ENCODE measurements at regions of chr1 and their contacts with region 1.

Region 1: GRCh38 chr1:27525296-27526272 is 35.6 kb upstream of the WASF2 start:
- DNase-seq: peak; percentile 85
- ATAC-seq: peak; percentile 56
- H3K4me3 Mint-ChIP-seq: peak overlapping the region; percentile 66
- H3K27ac Mint-ChIP-seq: peak overlapping the region; percentile 65
- H3K4me1 Mint-ChIP-seq: peaks cover 67% of the 10 kb centered on the region
- H3K27me3 Mint-ChIP-seq: no peaks in the 10 kb centered on the region

Region 2: GRCh38 chr1:27392096-27392777 is 133.3 kb before region 1 on chr1 and contains the start of gene GPR3:
- CTCF ChIA-PET with region 1: interaction called, 11 read pairs
- POLR2A ChIA-PET with region 1: no interaction called
- DNase-seq: peak; percentile 95
- ATAC-seq: peak; percentile 94
- H3K4me3 Mint-ChIP-seq: peak within 1 kb of the TSS; percentile 74
- H3K27ac Mint-ChIP-seq: peak within 1 kb of the TSS; percentile 82
- H3K4me1 Mint-ChIP-seq: peaks cover 25% of the 10 kb centered on the region
- H3K27me3 Mint-ChIP-seq: peaks cover 12% of the 10 kb centered on the region
- total RNA-seq, gene GPR3: 0.47 to 0.66 TPM

Region 3: GRCh38 chr1:27489910-27490741 is 35.5 kb before region 1 on chr1 and contains the start of gene WASF2:
- CTCF ChIA-PET with region 1: interaction called, 11 read pairs
- POLR2A ChIA-PET with region 1: interaction called, 51 read pairs
- DNase-seq: peak; percentile 98
- ATAC-seq: peak; percentile 94
- H3K4me3 Mint-ChIP-seq: peak within 1 kb of the TSS; percentile 83
- H3K27ac Mint-ChIP-seq: peak within 1 kb of the TSS; percentile 99
- H3K4me1 Mint-ChIP-seq: peaks cover 28% of the 10 kb centered on the region
- H3K27me3 Mint-ChIP-seq: no peaks in the 10 kb centered on the region
- total RNA-seq, gene WASF2: 120 to 127 TPM

Region 4: DNA sequence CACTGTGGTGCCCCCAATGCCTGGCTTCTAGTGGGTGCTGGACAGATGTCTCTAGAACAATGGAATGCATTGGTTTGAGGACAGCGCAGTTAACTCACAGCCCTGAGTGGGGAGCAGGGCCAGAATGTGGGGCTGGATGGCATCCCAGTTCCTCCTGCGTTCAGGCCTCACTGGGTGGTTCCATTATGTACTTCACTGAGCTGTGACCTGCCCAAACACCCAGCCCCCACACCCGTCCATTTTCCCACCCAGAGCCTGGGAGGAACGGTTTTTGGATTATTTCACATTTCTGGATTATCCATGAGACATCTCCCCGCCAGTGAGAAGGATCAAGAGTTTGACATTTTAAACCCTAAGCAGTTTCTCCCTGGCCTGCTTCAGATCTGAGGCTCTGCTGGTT is 19.7 kb after region 1 on chr1:
- CTCF ChIA-PET with region 1: no interaction called
- POLR2A ChIA-PET with region 1: no interaction called
- DNase-seq: no peak
- ATAC-seq: no peak
- H3K4me3 Mint-ChIP-seq: no peak overlapping the region
- H3K27ac Mint-ChIP-seq: no peak overlapping the region
- H3K4me1 Mint-ChIP-seq: peaks cover 20% of the 10 kb centered on the region
- H3K27me3 Mint-ChIP-seq: no peaks in the 10 kb centered on the region

Region 5: GRCh38 chr1:27568300-27569087 is 42.9 kb after region 1 on chr1:
- CTCF ChIA-PET with region 1: interaction called, 17 read pairs
- POLR2A ChIA-PET with region 1: interaction called, 5 read pairs
- DNase-seq: peak; percentile 94
- ATAC-seq: peak; percentile 98
- H3K4me3 Mint-ChIP-seq: peak overlapping the region; percentile 64
- H3K27ac Mint-ChIP-seq: peak overlapping the region; percentile 46
- H3K4me1 Mint-ChIP-seq: peaks cover 29% of the 10 kb centered on the region
- H3K27me3 Mint-ChIP-seq: no peaks in the 10 kb centered on the region

Region 6: GRCh38 chr1:27736252-27736651 is 210.7 kb after region 1 on chr1:
- CTCF ChIA-PET with region 1: no interaction called
- POLR2A ChIA-PET with region 1: no interaction called
- DNase-seq: no peak
- ATAC-seq: no peak
- H3K4me3 Mint-ChIP-seq: no peak overlapping the region
- H3K27ac Mint-ChIP-seq: no peak overlapping the region
- H3K4me1 Mint-ChIP-seq: no peaks in the 10 kb centered on the region
- H3K27me3 Mint-ChIP-seq: no peaks in the 10 kb centered on the region